ENCODE measurements at regions of chr1 and their contacts with region 1.

Region 1: DNA sequence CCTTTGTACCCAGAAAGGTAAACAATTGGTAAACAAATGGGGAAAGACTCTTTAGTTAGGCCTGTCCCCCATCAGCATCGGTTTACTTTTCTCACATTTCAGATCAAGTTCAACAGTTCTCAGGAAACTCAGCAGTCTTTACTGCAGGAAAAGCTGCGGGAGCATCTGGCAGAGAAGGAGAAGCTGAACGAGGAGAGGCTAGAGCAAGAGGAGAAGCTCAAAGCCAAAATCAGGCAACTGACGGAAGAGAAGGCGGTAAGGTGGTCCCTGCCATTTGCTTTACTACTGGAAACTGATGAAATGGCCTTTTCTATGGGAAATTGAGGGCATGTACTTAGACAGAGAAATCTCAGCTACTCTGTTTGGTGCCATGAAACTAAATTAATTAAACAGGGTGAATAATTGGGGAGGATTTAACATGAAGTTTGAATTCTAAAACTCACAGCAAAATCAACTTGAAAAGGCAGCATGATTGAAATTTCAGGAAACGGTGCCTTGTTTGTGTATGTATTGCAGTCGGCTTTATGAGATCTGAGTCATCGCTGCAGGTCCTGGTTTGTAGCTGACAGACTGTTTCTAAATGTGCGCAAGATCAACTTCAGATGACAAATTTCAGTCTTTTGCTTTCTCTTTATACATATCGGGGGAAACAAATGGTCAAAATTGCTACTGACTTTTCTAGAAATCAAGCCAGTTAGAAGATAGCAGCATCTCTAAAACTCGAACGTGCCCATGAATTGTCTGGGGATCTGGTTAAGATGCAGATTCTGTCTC is 67.9 kb upstream of the EFHD2 start:
- DNase-seq: no peak
- ATAC-seq: no peak
- H3K4me3 ChIP-seq: no peak overlapping the region
- H3K27ac ChIP-seq: no peak overlapping the region
- H3K4me1 ChIP-seq: peaks cover 5 to 72% (median 33%) of the 10 kb centered on the region in 9 donors
- H3K27me3 ChIP-seq: peaks cover 0 to 8% (median 0%) of the 10 kb centered on the region in 7 donors
- CTCF ChIP-seq: no peak

Region 2: DNA sequence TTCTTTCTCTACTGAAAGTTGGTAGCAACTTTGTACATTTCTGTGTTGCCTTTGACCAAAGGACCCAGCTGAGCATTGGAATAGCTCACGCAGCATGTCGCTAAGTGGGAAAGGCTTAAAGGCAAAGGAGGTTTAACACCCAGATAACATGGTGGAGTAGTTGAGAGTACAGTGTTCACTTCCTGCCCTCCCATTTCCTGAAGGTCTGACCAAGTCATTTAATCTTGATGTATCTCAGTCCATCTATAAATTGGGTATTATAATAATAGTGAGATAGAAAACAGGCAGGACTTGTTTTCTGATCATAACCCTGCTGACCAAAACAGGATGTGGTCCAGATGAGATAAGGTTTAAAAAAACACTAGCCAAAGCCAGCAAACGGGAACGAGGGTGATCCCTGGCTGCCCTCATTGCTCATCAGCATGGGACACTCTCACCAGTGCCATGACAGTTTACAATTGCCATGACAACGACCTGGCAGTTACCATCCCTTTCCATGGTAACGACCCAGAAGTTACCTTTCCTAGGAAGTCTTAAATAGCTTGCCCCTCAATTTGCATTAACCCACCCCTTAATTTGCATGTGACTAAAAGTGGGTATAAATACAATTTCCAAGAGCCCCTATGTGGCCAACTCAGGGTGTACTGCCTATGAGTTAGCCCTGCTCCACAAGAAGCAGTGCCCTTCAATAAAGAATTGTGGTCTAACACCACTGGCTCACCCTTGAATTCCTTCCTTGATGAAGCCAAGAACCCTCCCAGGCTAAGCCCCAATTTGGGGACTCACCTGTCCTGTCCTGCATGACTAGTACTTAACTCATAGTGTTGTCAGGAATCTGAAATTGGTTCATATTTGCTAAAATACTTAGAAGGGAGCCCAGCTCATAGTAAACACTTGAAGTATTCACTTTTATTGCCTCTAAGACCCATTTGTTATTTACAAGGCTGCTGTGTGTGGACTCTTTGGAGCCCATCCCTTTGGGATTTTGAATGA is 123.2 kb before region 1 on chr1:
- intact Hi-C with region 1: no loop called
- DNase-seq: peak in 1 of 2 donors; percentile 34
- ATAC-seq: peak in 4 of 8 donors; percentile 49 to 66 (median 58)
- H3K4me3 ChIP-seq: no peak overlapping the region
- H3K27ac ChIP-seq: peak overlapping the region in 1 of 10 donors; percentile 30
- H3K4me1 ChIP-seq: peaks cover 0 to 34% (median 13%) of the 10 kb centered on the region in 9 donors
- H3K27me3 ChIP-seq: no peaks in the 10 kb centered on the region
- CTCF ChIP-seq: no peak

Region 3: DNA sequence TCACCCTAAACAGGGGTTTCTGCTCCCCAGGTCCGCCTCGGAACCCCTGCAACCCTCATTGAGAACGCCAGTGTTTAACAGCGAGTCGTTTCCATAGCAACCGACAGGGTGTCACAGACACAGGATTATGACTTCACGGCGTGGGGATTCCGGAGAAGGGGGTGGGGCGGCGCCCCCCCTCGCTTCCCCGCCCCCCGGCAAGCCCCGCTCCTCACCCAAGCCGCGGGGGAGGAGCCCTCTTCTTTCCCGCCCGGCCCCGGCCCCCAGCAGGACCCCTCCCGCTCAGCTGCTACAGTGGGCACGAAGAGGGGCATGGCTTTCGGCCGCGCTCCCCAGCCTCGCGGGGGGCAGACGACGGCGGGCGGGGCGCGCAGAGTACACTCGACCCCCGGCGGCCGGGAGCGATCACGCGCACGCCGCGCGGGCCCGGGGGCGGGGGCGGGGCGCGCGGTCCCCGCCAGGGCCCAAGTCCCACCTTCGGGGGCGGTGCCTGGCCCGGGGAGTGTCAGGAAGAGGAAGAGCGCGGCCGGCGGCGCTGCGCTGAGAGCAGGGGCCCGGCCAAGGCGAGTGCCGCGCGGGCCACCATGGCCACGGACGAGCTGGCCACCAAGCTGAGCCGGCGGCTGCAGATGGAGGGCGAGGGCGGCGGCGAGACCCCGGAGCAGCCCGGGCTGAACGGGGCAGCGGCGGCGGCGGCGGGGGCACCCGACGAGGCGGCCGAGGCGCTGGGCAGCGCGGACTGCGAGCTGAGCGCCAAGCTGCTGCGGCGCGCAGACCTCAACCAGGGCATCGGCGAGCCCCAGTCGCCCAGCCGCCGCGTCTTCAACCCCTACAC is 67.8 kb after region 1 on chr1 and contains the start of gene EFHD2:
- intact Hi-C with region 1: loop called in 2 of 10 experiments (anchors 5 kb)
- DNase-seq: peak; percentile 85 to 86
- ATAC-seq: peak; percentile 79 to 96 (median 88)
- H3K4me3 ChIP-seq: peak within 1 kb of the TSS; percentile 70 to 94 (median 84)
- H3K27ac ChIP-seq: peak within 1 kb of the TSS in 9 of 10 donors; percentile 66 to 96 (median 81)
- H3K4me1 ChIP-seq: peaks cover 7 to 58% (median 43%) of the 10 kb centered on the region in 9 donors
- H3K27me3 ChIP-seq: no peaks in the 10 kb centered on the region
- CTCF ChIP-seq: no peak
- total RNA-seq, gene EFHD2: 9.4 to 32.1 (median 13.5) TPM

Region 4: GRCh38 chr1:15430787-15431570 is 89.2 kb after region 1 on chr1:
- intact Hi-C with region 1: no loop called
- DNase-seq: peak; percentile 70 to 77
- ATAC-seq: peak; percentile 53 to 81 (median 72)
- H3K4me3 ChIP-seq: no peak overlapping the region
- H3K27ac ChIP-seq: no peak overlapping the region
- H3K4me1 ChIP-seq: peaks cover 5 to 28% (median 11%) of the 10 kb centered on the region in 9 donors
- H3K27me3 ChIP-seq: no peaks in the 10 kb centered on the region
- CTCF ChIP-seq: peak; percentile 94 to 99 (median 96)

Region 5: GRCh38 chr1:15650433-15650832 is 308.6 kb after region 1 on chr1:
- intact Hi-C with region 1: no loop called
- DNase-seq: no peak
- ATAC-seq: no peak
- H3K4me3 ChIP-seq: no peak overlapping the region
- H3K27ac ChIP-seq: no peak overlapping the region
- H3K4me1 ChIP-seq: no peaks in the 10 kb centered on the region
- H3K27me3 ChIP-seq: no peaks in the 10 kb centered on the region
- CTCF ChIP-seq: no peak

Measured in heart right ventricle (tissue), 16 donors.